Panc1 (cell line): ENCODE measurements at regions of chr14 and their contacts with region 1.

Region 1: GRCh38 chr14:76647697-76648298 is 113.5 kb upstream of the VASH1 start:
- DNase-seq: peak; percentile 50
- ATAC-seq: peak; percentile 74; the same call in 1 of the 2 replicates
- H3K4me3 ChIP-seq: no peak overlapping the region
- H3K27ac ChIP-seq: no peak overlapping the region
- H3K4me1 ChIP-seq: no peaks in the 10 kb centered on the region
- H3K27me3 ChIP-seq: no peaks in the 10 kb centered on the region; the same call in 1 of the 2 replicates
- CTCF ChIP-seq: peak; percentile 83

Region 2: GRCh38 chr14:76386915-76387782 is 260.6 kb before region 1 on chr14:
- CTCF ChIA-PET with region 1: no interaction called
- POLR2A ChIA-PET with region 1: no interaction called
- in situ Hi-C with region 1: no loop called
- intact Hi-C with region 1: loop called (anchors 10 kb)
- DNase-seq: peak; percentile 52
- ATAC-seq: peak; percentile 98
- H3K4me3 ChIP-seq: no peak overlapping the region
- H3K27ac ChIP-seq: no peak overlapping the region
- H3K4me1 ChIP-seq: no peaks in the 10 kb centered on the region
- H3K27me3 ChIP-seq: peaks cover 16% of the 10 kb centered on the region
- CTCF ChIP-seq: peak; percentile 92

Region 3: GRCh38 chr14:76514613-76515012 is 133.2 kb before region 1 on chr14:
- CTCF ChIA-PET with region 1: interaction called, 3 read pairs
- POLR2A ChIA-PET with region 1: no interaction called
- in situ Hi-C with region 1: no loop called
- intact Hi-C with region 1: loop called (anchors 5 kb)
- DNase-seq: no peak
- ATAC-seq: no peak
- H3K4me3 ChIP-seq: no peak overlapping the region
- H3K27ac ChIP-seq: no peak overlapping the region
- H3K4me1 ChIP-seq: no peaks in the 10 kb centered on the region
- H3K27me3 ChIP-seq: no peaks in the 10 kb centered on the region; the same call in 1 of the 2 replicates
- CTCF ChIP-seq: peak; percentile 30; the same call in 1 of the 2 replicates

Region 4: GRCh38 chr14:78074561-78074960 is 1426.8 kb after region 1 on chr14:
- CTCF ChIA-PET with region 1: no interaction called
- POLR2A ChIA-PET with region 1: no interaction called
- in situ Hi-C with region 1: no loop called
- intact Hi-C with region 1: no loop called
- DNase-seq: no peak
- ATAC-seq: no peak
- H3K4me3 ChIP-seq: no peak overlapping the region
- H3K27ac ChIP-seq: no peak overlapping the region
- H3K4me1 ChIP-seq: no peaks in the 10 kb centered on the region
- H3K27me3 ChIP-seq: no peaks in the 10 kb centered on the region
- CTCF ChIP-seq: no peak